Sigmoid colon (tissue), 7 donors: ENCODE measurements at regions of chr9 and their contacts with region 1.

Region 1: DNA sequence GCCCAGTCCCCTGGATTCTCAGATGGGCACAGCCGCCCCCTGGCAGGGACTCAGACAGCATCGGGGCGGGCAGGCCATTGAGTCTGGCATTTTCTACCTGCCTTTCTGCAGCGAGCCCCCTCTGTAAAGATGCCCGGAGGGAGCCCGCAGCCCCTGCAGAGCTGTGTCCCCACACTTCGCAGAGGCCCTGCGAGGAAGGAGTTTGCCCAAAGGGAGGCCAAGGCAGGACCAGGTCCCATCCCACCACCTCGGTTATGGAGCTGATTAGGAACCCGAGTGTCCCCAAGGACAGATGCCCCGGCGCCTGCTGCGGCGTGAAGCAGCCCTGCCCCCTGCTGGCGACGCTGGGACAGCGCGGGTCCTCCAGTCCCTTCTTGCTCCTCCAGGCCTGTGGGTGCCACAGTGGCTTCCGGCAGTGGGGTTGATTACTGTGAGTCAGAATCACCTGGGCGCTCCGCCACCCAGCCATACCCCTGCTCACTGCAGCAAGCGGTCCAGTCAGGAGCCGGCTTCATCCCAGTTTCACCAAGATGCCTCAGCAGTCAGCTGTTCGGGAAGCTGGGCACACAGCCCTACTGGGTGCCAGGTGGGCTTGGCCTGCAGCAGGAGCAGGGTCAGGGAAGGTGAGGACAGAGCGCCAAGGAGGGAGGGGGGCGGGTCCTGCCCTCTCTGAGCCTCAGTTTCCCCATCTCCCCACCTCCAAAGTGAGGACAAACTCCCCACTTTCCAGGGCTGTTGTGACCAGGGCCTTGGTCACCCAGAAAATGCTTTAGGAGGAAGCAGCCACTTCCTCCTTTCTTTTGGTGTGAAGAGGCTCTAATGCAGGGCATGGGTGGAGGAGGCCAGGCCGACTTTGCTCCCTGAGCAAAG is 117.1 kb downstream of the RXRA start:
- DNase-seq: peak; percentile 95
- H3K4me3 ChIP-seq: no peak overlapping the region
- H3K27ac ChIP-seq: peak overlapping the region in 2 of 4 donors; percentile 22 to 43
- H3K4me1 ChIP-seq: peaks cover 0 to 27% (median 25%) of the 10 kb centered on the region in 4 donors
- H3K27me3 ChIP-seq: peaks cover 3 to 20% (median 10%) of the 10 kb centered on the region in 3 donors
- CTCF ChIP-seq: peak; percentile 98 to 99 (median 99)
- EP300 ChIP-seq: no peak
- POLR2A ChIP-seq: no peak

Region 2: GRCh38 chr9:133889584-133890301 is 553.7 kb before region 1 on chr9:
- intact Hi-C with region 1: no loop called
- DNase-seq: no peak
- H3K4me3 ChIP-seq: no peak overlapping the region
- H3K27ac ChIP-seq: no peak overlapping the region
- H3K4me1 ChIP-seq: no peaks in the 10 kb centered on the region
- H3K27me3 ChIP-seq: no peaks in the 10 kb centered on the region
- CTCF ChIP-seq: no peak
- EP300 ChIP-seq: no peak
- POLR2A ChIP-seq: no peak

Region 3: GRCh38 chr9:134171316-134172197 is 271.8 kb before region 1 on chr9:
- intact Hi-C with region 1: loop called (anchors 1 kb)
- DNase-seq: peak; percentile 84
- H3K4me3 ChIP-seq: no peak overlapping the region
- H3K27ac ChIP-seq: peak overlapping the region in 3 of 4 donors; percentile 58 to 67 (median 63)
- H3K4me1 ChIP-seq: peaks cover 0 to 41% (median 30%) of the 10 kb centered on the region in 4 donors
- H3K27me3 ChIP-seq: peaks cover 13 to 32% (median 14%) of the 10 kb centered on the region in 3 donors
- CTCF ChIP-seq: no peak
- EP300 ChIP-seq: no peak
- POLR2A ChIP-seq: no peak

Region 4: DNA sequence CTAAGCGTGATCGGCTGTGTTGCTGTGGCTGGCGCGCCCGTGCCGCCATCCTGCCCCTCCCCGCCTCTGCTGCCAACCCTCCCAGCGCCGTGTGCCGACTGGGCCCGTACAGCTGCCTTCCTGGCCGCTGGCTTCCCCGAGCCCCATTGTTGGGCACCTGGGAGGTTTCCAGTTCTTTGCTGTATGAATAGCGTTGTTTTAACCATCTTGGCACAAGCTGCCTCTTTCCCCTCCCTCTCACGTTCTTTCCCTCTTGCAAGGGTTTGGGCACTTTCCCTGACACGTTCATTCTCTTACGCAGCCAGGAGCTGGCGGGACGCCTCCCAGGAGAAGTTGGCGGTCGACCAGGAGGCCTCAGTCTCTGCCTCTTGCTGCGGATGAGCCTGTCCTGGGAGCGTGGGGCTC is 160.3 kb before region 1 on chr9:
- intact Hi-C with region 1: loop called (anchors 5 kb)
- DNase-seq: peak; percentile 96
- H3K4me3 ChIP-seq: peak overlapping the region in 2 of 4 donors; percentile 12 to 25
- H3K27ac ChIP-seq: peak overlapping the region; percentile 42 to 73 (median 69)
- H3K4me1 ChIP-seq: peaks cover 0 to 18% (median 17%) of the 10 kb centered on the region in 4 donors
- H3K27me3 ChIP-seq: no peaks in the 10 kb centered on the region
- CTCF ChIP-seq: no peak
- EP300 ChIP-seq: peak in 1 of 4 donors; percentile 43
- POLR2A ChIP-seq: no peak